HEK293 (cell line): ENCODE measurements at regions of chr17 and their contacts with region 1.

Region 1: DNA sequence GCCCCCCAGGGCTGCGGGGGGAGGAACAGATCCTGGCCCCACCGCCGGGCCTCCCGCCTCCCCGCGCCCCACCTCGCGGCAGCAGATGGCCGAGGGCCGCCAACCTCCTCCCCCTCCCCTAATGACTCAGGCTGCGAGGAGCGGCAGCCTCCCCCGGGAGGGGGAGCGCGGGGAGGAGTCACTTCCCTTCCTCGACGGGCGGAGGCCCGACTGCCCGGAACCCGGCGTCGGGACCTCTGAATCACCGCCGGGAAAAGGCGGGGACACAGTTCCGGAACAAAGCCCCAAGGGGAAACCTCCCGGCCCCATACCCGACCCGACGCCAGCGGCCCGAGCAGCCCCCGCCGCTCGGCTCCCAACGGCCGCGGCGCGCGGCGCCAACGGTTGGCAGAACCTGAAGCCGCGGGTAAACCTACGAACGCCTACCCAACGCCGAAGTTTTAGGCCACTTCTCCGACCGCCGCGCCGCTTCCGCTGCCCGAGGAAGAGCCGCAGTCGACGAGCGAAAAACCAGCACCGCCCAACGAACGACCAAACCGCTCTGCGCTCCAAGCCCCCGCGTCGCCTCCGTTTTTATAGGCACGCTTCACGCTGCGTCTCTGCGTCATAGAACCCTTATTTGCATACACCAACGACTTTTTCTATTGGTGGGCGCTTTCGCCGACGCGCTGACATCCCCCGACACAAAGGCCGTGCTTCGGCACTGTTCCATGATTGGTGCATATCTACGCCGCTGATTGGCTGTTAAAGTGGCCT is 5.2 kb upstream of the UNK start:
- H3K4me3 ChIP-seq: peak overlapping the region; percentile 72
- H3K27ac ChIP-seq: peak overlapping the region; percentile 94
- H3K4me1 ChIP-seq: peaks cover 17% of the 10 kb centered on the region; the same call in 1 of the 2 replicates
- CTCF ChIP-seq: no peak

Region 2: DNA sequence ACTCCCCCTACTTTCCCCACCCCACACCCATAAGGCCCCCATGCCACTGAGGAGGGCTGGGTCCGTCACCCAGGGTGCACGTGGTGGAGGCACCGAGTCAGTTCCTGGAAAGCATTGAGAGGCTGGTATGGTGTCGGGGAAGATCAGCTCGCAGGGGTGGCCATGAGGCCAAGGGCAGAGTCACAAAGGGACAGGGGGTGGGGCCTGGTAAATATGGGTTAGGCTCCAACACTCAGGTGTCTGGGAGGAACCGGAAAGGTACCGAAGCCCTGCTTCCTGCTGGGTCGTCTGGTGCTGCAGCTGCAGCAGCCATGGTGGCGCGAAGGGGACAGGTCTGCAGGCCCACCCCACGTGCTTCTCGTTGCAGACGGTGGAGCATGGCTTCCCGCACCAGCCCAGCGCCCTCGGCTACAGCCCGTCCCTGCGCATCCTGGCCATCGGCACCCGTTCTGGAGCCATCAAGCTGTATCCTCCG is 223.7 kb before region 1 on chr17:
- CTCF ChIA-PET with region 1: no interaction called
- POLR2A ChIA-PET with region 1: no interaction called
- H3K4me3 ChIP-seq: no peak overlapping the region
- H3K27ac ChIP-seq: no peak overlapping the region
- H3K4me1 ChIP-seq: 0 out of 2 replicates have a peak, but pooled peaks cover 5% of the 10 kb centered on the region
- CTCF ChIP-seq: no peak

Region 3: DNA sequence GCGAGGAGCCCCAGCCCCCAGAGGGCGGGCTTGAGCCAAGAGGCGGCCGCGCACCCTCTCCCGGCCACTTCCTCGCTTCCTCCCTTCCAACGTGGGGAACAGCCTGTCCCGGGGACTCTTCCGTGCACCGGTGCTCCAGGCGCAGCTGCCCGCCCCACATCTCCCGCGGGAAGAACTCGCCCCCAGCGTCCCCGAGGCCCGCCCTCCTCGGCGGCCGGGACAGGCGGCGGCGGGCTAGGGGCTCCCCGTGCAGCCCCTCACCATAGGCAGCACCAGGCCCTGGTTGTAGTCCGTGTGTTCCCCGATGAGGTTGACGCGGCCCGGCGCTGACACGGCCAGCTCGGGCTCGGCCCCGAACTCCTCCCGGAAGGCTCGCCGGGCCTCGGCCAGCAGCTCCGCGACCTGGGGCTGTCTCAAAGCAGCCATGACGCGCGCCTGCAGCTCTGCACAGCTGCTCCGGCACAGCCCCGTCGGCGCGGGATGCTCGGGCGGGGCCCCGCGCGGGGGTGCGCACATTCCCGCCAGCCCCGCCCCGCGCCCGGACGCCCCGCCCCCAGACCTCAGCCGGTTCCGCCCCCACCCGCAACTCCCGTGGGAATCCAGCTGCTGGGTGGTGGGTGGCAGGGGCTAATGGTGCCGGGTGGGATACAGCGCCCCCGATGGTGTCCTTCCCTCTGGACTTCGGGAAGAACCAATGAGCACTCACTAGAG is 14.5 kb before region 1 on chr17 and contains the start of gene GALK1:
- CTCF ChIA-PET with region 1: interaction called, 73 read pairs
- POLR2A ChIA-PET with region 1: interaction called, 234 read pairs
- H3K4me3 ChIP-seq: peak within 1 kb of the TSS; percentile 63
- H3K27ac ChIP-seq: peak within 1 kb of the TSS; percentile 70
- H3K4me1 ChIP-seq: peaks cover 3% of the 10 kb centered on the region; the same call in 1 of the 2 replicates
- CTCF ChIP-seq: peak; percentile 93

Region 4: GRCh38 chr17:75799398-75799797 is 20.0 kb after region 1 on chr17:
- CTCF ChIA-PET with region 1: interaction called, 6 read pairs
- POLR2A ChIA-PET with region 1: interaction called, 51 read pairs
- H3K4me3 ChIP-seq: no peak overlapping the region
- H3K27ac ChIP-seq: no peak overlapping the region
- H3K4me1 ChIP-seq: no peaks in the 10 kb centered on the region
- CTCF ChIP-seq: no peak

Region 5: GRCh38 chr17:75821552-75821951 is 42.1 kb after region 1 on chr17:
- CTCF ChIA-PET with region 1: interaction called, 11 read pairs
- POLR2A ChIA-PET with region 1: interaction called, 23 read pairs
- H3K4me3 ChIP-seq: no peak overlapping the region
- H3K27ac ChIP-seq: no peak overlapping the region
- H3K4me1 ChIP-seq: no peaks in the 10 kb centered on the region
- CTCF ChIP-seq: no peak

Region 6: DNA sequence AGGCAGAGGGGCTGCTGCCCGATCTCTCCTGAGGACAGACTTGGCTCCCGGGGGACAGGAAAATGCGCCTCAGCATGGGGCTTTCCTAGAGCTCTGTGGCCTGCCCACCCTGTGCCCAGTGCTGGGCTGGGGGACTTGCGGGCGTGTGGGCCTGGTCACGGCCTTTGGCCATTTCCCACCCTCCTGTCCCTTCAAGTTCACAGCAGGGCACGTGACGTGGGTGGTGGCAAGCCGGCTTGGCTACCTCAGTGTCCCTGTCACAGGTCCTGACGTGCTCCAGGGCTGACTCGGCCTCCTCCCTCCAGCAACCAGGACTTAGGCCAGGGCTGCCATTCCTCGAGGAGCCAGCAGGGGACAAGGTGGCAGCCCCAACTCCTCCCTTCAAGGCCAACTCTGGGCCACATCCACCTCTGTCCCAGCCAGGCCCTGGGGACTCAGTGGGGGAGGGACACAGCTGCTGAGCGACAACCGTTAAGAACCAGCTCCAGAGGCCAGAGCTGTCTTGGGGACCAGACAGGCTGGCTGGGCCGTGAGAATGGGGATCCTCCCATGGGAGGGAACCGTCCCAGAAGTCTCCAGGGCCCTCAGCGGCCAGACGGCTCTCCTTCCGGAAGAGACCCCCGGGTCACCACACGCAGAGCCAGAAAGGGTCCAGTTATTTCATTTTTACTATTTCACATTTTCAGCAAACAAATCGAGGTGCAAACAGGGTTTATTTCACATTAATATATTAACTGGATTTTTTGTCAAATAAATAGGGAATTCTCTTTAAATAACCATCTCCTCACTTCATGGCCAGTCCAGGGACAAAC is 65.8 kb after region 1 on chr17:
- CTCF ChIA-PET with region 1: interaction called, 7 read pairs
- POLR2A ChIA-PET with region 1: interaction called, 13 read pairs
- H3K4me3 ChIP-seq: no peak overlapping the region
- H3K27ac ChIP-seq: no peak overlapping the region
- H3K4me1 ChIP-seq: no peaks in the 10 kb centered on the region; the same call in 1 of the 2 replicates
- CTCF ChIP-seq: peak; percentile 91

Region 7: DNA sequence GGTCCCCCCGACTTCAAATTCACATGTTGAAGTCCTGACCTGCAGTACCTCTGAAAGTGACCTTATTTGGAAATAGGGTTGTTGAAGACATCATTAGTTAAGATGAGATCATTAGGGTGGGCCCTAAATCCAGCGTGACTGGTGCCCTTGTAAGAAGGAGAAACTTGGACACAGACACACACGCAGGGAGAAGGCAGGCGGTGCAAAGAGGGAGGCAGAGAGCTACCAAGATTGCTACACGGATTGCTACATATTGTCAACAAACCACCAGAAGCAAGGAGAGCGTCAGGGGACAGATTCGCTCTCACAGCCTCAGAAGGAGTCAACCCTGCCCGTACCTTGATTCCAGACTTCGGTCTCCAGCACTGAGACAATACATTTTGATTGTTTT is 82.5 kb after region 1 on chr17:
- CTCF ChIA-PET with region 1: interaction called, 7 read pairs
- POLR2A ChIA-PET with region 1: interaction called, 26 read pairs
- H3K4me3 ChIP-seq: no peak overlapping the region
- H3K27ac ChIP-seq: no peak overlapping the region
- H3K4me1 ChIP-seq: 0 out of 2 replicates have a peak, but pooled peaks cover 4% of the 10 kb centered on the region
- CTCF ChIP-seq: no peak

Region 8: GRCh38 chr17:75904749-75905521 is 125.5 kb after region 1 on chr17 and contains the start of gene MRPL38:
- CTCF ChIA-PET with region 1: no interaction called
- POLR2A ChIA-PET with region 1: interaction called, 13 read pairs
- H3K4me3 ChIP-seq: peak within 1 kb of the TSS; percentile 92
- H3K27ac ChIP-seq: peak within 1 kb of the TSS; percentile 87
- H3K4me1 ChIP-seq: peaks cover 8% of the 10 kb centered on the region
- CTCF ChIP-seq: peak; percentile 99